ENCODE measurements at regions of chr21 and their contacts with region 1.

Region 1: GRCh38 chr21:25895565-25896205 is 160.9 kb downstream of the GABPA start:
- DNase-seq: peak; percentile 34
- ATAC-seq: peak; percentile 61
- H3K4me3 Mint-ChIP-seq: no peak overlapping the region
- H3K27ac Mint-ChIP-seq: no peak overlapping the region
- H3K4me1 Mint-ChIP-seq: peaks cover 10% of the 10 kb centered on the region
- H3K27me3 Mint-ChIP-seq: no peaks in the 10 kb centered on the region

Region 2: GRCh38 chr21:25676451-25676850 is 219.2 kb before region 1 on chr21:
- CTCF ChIA-PET with region 1: no interaction called
- POLR2A ChIA-PET with region 1: no interaction called
- intact Hi-C with region 1: no loop called
- DNase-seq: no peak
- ATAC-seq: no peak
- H3K4me3 Mint-ChIP-seq: no peak overlapping the region
- H3K27ac Mint-ChIP-seq: no peak overlapping the region
- H3K4me1 Mint-ChIP-seq: no peaks in the 10 kb centered on the region
- H3K27me3 Mint-ChIP-seq: peaks cover 2% of the 10 kb centered on the region

Region 3: GRCh38 chr21:25857308-25858074 is 38.2 kb before region 1 on chr21:
- CTCF ChIA-PET with region 1: no interaction called
- POLR2A ChIA-PET with region 1: no interaction called
- intact Hi-C with region 1: no loop called
- DNase-seq: no peak
- ATAC-seq: no peak
- H3K4me3 Mint-ChIP-seq: no peak overlapping the region
- H3K27ac Mint-ChIP-seq: no peak overlapping the region
- H3K4me1 Mint-ChIP-seq: no peaks in the 10 kb centered on the region
- H3K27me3 Mint-ChIP-seq: peaks cover 2% of the 10 kb centered on the region

Region 4: GRCh38 chr21:26007951-26008498 is 112.3 kb after region 1 on chr21:
- CTCF ChIA-PET with region 1: no interaction called
- POLR2A ChIA-PET with region 1: no interaction called
- intact Hi-C with region 1: no loop called
- DNase-seq: no peak
- ATAC-seq: no peak
- H3K4me3 Mint-ChIP-seq: no peak overlapping the region
- H3K27ac Mint-ChIP-seq: no peak overlapping the region
- H3K4me1 Mint-ChIP-seq: peaks cover 5% of the 10 kb centered on the region
- H3K27me3 Mint-ChIP-seq: no peaks in the 10 kb centered on the region

Region 5: DNA sequence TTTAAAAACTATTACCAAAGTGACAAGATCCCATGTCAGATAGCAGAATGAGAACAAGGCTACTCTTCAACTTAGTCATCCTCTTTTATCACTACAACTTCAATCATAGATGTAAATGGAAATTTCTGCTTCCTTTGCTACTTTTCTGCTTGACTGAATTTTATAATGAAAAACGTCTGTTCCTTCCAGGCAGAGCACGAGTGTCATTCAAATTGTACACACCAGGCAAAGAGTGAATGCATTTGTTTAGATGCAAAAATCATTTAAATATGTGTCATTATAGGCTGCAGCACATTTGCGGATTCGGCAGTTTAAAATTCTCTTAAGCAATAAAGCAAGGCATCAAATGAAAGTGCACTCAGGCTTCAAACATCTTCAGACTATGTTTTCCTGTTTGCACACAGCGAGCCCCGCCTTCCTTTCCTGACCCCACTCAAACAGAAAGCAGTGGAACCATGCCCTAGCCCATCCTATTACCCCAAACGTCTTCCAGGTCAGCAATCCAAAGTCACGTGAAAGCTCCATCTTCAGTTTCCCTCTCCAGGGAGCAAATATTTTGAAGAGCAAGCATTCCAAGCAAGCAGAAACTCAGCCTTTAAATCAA is 175.2 kb after region 1 on chr21:
- CTCF ChIA-PET with region 1: interaction called, 3 read pairs
- POLR2A ChIA-PET with region 1: no interaction called
- intact Hi-C with region 1: loop called in 1 of 2 experiments (anchors 10 kb)
- DNase-seq: peak; percentile 48
- ATAC-seq: peak; percentile 70
- H3K4me3 Mint-ChIP-seq: peak overlapping the region; percentile 56
- H3K27ac Mint-ChIP-seq: peak overlapping the region; percentile 66
- H3K4me1 Mint-ChIP-seq: peaks cover 55% of the 10 kb centered on the region
- H3K27me3 Mint-ChIP-seq: no peaks in the 10 kb centered on the region

Region 6: GRCh38 chr21:26715878-26716506 is 820.3 kb after region 1 on chr21:
- CTCF ChIA-PET with region 1: interaction called, 8 read pairs
- POLR2A ChIA-PET with region 1: no interaction called
- intact Hi-C with region 1: loop called in 1 of 2 experiments (anchors 1 kb)
- DNase-seq: peak; percentile 41
- ATAC-seq: no peak
- H3K4me3 Mint-ChIP-seq: no peak overlapping the region
- H3K27ac Mint-ChIP-seq: no peak overlapping the region
- H3K4me1 Mint-ChIP-seq: peaks cover 3% of the 10 kb centered on the region
- H3K27me3 Mint-ChIP-seq: peaks cover 10% of the 10 kb centered on the region